ENCODE measurements at regions of chr2 and their contacts with region 1.

Region 1: GRCh38 chr2:136384531-136385303 is 266.8 kb upstream of the CXCR4 start:
- DNase-seq: peak; percentile 44
- H3K4me3 ChIP-seq: no peak overlapping the region
- H3K27ac ChIP-seq: no peak overlapping the region
- H3K4me1 ChIP-seq: no peaks in the 10 kb centered on the region
- H3K27me3 ChIP-seq: peaks cover 0 to 6% of the 10 kb centered on the region in 2 experiments
- CTCF ChIP-seq: peak; percentile 62 to 70
- POLR2A ChIP-seq: no peak

Region 2: GRCh38 chr2:135818937-135819610 is 565.6 kb before region 1 on chr2:
- CTCF ChIA-PET with region 1: interaction called, 3 read pairs
- POLR2A ChIA-PET with region 1: no interaction called
- dilution Hi-C with region 1: no loop called
- intact Hi-C with region 1: loop called (anchors 1 kb)
- DNase-seq: peak; percentile 16
- H3K4me3 ChIP-seq: no peak overlapping the region
- H3K27ac ChIP-seq: no peak overlapping the region
- H3K4me1 ChIP-seq: no peaks in the 10 kb centered on the region
- H3K27me3 ChIP-seq: peaks cover 0 to 4% of the 10 kb centered on the region in 2 experiments
- CTCF ChIP-seq: peak in 1 of 2 donors; percentile 34
- POLR2A ChIP-seq: no peak

Region 3: GRCh38 chr2:136141510-136142149 is 243.1 kb before region 1 on chr2:
- CTCF ChIA-PET with region 1: no interaction called
- POLR2A ChIA-PET with region 1: no interaction called
- dilution Hi-C with region 1: no loop called
- intact Hi-C with region 1: no loop called
- DNase-seq: no peak
- H3K4me3 ChIP-seq: no peak overlapping the region
- H3K27ac ChIP-seq: no peak overlapping the region
- H3K4me1 ChIP-seq: no peaks in the 10 kb centered on the region
- H3K27me3 ChIP-seq: peaks cover 0 to 4% of the 10 kb centered on the region in 2 experiments
- CTCF ChIP-seq: no peak
- POLR2A ChIP-seq: no peak

Region 4: DNA sequence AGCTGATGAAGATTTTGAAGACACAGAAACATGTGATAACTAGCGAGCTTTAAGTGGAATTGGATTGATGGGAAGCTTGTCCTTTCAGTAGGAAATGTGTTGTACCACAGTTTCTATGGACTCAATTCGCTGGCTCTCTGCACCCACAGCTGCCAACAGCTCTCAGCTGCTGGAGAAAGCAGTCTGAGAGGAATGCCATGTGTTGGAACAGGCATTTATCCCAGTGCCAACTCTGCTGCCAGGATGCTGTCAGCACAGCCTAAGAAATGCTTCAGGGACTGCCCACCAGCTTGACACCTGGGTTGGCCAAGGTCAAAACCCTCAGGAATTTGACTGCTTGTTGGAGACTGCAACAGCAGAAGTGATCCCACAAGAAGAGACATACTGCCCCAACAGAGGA is 187.6 kb after region 1 on chr2:
- CTCF ChIA-PET with region 1: no interaction called
- POLR2A ChIA-PET with region 1: no interaction called
- dilution Hi-C with region 1: no loop called
- intact Hi-C with region 1: no loop called
- DNase-seq: no peak
- H3K4me3 ChIP-seq: no peak overlapping the region
- H3K27ac ChIP-seq: no peak overlapping the region
- H3K4me1 ChIP-seq: no peaks in the 10 kb centered on the region
- H3K27me3 ChIP-seq: no peaks in the 10 kb centered on the region
- CTCF ChIP-seq: no peak
- POLR2A ChIP-seq: no peak

Measured in endothelial cell of umbilical vein (primary cell).